Adrenal gland (tissue), 19 donors: ENCODE measurements at regions of chr22 and their contacts with region 1.

Region 1: DNA sequence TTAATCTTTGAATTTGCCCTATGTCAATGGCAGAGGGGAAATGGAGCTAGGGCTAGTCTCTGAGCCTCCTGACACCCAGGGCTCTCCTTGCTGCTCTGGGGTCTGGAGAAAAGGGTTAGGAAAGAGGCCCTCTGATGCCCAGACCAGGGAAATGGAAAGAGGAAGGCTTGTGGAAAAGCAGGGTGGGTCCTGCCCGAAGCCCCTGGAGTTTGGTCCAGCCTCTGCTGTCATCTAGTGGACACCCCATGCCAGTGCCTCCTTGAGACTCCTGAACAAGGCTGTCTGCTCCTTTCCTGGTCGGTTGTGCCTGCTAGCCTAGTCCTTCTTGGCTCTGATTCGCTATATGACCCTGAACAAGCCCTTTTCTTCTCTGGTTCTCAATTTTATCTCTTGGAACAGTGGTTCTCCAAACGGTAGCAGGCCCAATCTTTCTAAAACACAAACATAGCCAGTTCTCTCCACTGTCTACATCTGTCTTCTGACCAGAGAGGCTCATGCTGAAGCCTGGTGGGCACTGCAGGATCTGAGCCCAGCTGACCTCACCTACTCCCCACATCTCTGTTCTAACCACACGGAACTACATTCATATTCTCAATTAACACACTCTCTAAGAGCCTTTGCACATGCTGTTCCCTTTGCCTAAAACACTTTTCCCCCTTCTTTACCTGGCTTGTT is 8.8 kb upstream of the PLA2G3 start:
- DNase-seq: peak; percentile 63 to 90 (median 83)
- H3K4me3 ChIP-seq: no peak overlapping the region
- H3K27ac ChIP-seq: peak overlapping the region in 2 of 5 donors; percentile 43 to 60
- H3K4me1 ChIP-seq: peaks cover 0 to 9% of the 10 kb centered on the region in 2 donors
- H3K27me3 ChIP-seq: no peaks in the 10 kb centered on the region
- CTCF ChIP-seq: peak; percentile 79 to 98 (median 94)
- POLR2A ChIP-seq: no peak

Region 2: DNA sequence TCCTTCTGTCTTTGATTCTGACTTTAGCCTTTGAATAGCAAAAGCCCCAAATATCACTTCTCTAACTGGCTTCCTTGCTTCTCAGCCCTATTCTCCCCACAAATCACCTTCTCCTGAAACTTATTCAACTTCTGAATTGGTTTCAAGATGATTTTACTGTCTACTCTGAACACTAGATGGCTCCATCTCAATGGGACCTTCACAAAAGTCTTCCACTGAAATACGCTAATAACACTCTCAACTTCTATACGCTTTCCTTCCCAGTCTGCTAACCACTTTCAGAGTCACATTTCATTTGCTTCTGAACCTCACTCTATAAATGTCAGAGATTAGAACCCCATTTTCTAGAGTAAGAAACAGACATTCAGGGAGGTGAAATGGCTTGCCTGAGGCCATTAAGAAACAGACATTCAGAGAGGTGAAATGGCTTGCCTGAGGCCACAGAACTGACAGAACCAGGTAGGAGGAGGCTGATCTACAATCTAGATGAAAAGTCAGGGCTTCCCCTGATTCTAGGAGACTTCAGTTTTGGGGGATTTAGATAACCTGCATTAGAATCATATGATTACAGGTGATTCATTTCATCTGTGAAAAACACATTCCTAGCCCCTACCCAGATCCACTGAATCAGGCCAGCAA is 201.2 kb before region 1 on chr22:
- intact Hi-C with region 1: loop called (anchors 5 to 10 kb)
- DNase-seq: no peak
- H3K4me3 ChIP-seq: no peak overlapping the region
- H3K27ac ChIP-seq: no peak overlapping the region
- H3K4me1 ChIP-seq: peaks cover 0 to 12% of the 10 kb centered on the region in 2 donors
- H3K27me3 ChIP-seq: no peaks in the 10 kb centered on the region
- CTCF ChIP-seq: peak; percentile 32 to 80 (median 62)
- POLR2A ChIP-seq: no peak

Region 3: DNA sequence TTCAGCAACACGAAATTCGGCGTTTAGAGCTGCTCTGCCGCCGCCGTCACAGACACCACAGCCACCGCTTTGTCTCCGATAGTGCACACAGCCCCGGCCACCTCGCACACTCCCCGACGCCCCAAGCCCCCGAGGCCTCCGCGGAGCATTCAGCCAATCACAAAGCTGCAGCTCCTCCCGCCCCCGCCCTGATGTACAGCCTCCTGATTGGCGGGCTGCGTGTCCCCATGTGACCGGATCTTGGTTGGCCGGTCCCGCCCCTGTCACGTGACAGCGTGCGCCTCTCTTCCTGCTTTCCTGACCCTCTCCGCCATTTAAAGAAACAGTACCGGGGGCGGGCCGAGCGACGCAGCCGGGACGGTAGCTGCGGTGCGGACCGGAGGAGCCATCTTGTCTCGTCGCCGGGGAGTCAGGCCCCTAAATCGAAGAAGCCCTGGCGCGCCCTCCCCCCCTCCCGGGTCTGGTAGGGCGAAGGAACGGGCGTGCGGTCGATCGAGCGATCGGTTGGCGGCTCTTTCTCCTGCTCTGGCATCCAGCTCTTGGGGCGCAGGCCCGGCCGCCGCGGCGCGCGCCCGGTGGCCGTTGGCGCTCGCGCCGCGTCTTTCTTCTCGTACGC is 180.1 kb before region 1 on chr22 and contains the start of gene TUG1:
- intact Hi-C with region 1: loop called in 1 of 2 experiments (anchors 10 kb)
- DNase-seq: peak; percentile 98 to 100 (median 99)
- H3K4me3 ChIP-seq: peak within 1 kb of the TSS; percentile 37 to 88 (median 62)
- H3K27ac ChIP-seq: peak within 1 kb of the TSS; percentile 56 to 98 (median 97)
- H3K4me1 ChIP-seq: peaks cover 8 to 40% of the 10 kb centered on the region in 2 donors
- H3K27me3 ChIP-seq: no peaks in the 10 kb centered on the region
- CTCF ChIP-seq: peak in 1 of 6 experiments; percentile 26
- POLR2A ChIP-seq: peak; percentile 52 to 91
- total RNA-seq, gene TUG1: 33.3 to 90.5 (median 55.0) TPM

Region 4: DNA sequence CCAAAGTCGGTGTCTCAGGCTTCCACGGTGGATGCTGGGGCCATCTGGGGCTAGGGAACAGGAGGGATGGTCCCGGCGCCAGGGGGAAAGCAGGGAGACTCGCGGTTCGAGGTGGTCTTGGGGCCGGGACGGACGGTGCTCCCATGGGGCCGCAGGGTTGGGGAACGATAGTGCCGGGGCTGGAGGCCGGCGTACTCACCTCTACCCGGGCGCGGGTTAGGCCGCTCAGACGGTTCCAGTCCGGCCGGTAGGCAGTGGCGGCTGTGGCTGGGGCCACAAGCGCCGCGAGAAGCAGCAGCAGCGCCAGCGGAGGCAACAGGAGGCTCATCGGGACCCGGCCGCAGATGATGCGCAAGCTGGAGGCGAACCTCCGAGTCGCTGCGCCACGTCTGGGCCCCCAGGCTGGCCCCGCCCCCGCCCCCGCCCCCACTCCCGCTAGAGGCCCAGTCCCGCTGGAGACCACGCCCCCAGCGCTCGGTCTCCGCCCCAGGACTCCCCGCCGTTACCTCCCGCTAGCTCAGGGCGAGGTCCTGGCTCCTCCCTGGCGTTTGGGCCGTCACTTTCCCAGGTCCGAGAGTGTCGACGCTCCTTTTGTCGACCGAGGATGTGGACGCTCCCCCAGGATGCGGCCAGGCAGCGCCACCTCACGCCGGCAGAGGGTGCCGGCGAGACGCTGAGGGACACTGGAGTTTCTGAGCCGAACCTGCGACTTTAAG is 41.8 kb before region 1 on chr22 and contains the start of gene SELENOM:
- intact Hi-C with region 1: loop called in 1 of 2 experiments (anchors 5 kb)
- DNase-seq: peak; percentile 94 to 98 (median 97)
- H3K4me3 ChIP-seq: peak within 1 kb of the TSS in 3 of 4 donors; percentile 7 to 64 (median 29)
- H3K27ac ChIP-seq: peak within 1 kb of the TSS in 4 of 5 donors; percentile 70 to 95 (median 86)
- H3K4me1 ChIP-seq: peaks cover 3 to 19% of the 10 kb centered on the region in 2 donors
- H3K27me3 ChIP-seq: no peaks in the 10 kb centered on the region
- CTCF ChIP-seq: peak; percentile 86 to 98 (median 94)
- POLR2A ChIP-seq: peak; percentile 70 to 85
- total RNA-seq, gene SELENOM: 6.6 to 546 (median 108) TPM